CD8-positive, alpha-beta memory T cell (primary cell): ENCODE measurements at regions of chr9 and their contacts with region 1.

Region 1: GRCh38 chr9:134066913-134067851 is 644 bp downstream of the BRD3 start:
- DNase-seq: peak; percentile 46 to 68 (median 52)
- H3K4me3 ChIP-seq: peak overlapping the region; percentile 80
- H3K4me3 Mint-ChIP-seq: peak overlapping the region; percentile 87 to 98 (median 92)
- H3K27ac ChIP-seq: peak overlapping the region; percentile 69
- H3K27ac Mint-ChIP-seq: peak overlapping the region; percentile 59 to 98 (median 88)
- H3K4me1 ChIP-seq: peaks cover 28% of the 10 kb centered on the region
- H3K4me1 Mint-ChIP-seq: peaks cover 30 to 50% (median 32%) of the 10 kb centered on the region in 3 donors
- H3K27me3 ChIP-seq: peaks cover 20% of the 10 kb centered on the region
- H3K27me3 Mint-ChIP-seq: peaks cover 13 to 15% of the 10 kb centered on the region in 2 donors

Region 2: DNA sequence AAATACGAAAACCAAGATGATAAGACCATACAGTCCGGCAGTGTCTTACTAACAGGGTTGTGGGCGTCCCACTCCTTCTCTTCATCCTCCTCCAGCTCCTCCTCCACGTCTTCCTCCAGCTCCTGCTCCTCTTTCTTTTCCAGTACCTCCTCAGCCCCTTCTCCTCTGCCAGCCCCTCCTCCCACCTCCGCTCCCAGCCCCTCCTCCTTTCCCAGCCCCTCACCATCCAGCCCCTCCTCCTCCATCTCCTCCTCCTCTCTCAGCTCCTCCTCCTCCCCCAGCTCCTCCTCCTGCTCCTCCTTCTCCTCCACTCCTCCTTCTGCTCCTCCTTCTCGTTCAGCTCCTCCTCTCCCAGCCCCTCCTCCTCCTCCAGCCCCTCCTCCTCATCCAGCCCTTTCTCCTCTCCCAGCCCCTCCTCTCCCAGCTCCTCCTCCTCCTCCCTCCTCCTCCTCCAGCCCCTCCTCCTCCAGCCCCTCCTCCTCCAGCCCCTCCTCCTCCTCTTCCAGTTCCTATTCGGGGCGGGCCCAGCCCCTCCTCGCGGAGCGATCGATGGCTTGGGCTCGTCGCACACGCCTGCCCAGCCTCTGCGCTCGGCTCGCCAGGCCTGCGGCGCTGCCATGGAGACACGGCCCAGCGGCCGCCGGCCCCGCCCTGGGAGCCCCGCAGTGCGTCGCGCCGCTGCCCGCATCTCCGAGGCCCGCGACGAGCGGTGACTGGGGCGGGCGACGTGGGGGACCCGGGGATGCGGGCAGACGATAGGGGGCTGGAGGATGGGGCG is 42.2 kb before region 1 on chr9 and contains the start of gene BRD3OS:
- CTCF ChIA-PET with region 1: interaction called, 3 read pairs
- POLR2A ChIA-PET with region 1: interaction called, 13 read pairs
- DNase-seq: peak; percentile 87 to 95 (median 90)
- H3K4me3 ChIP-seq: peak within 1 kb of the TSS; percentile 70
- H3K4me3 Mint-ChIP-seq: peak within 1 kb of the TSS; percentile 70 to 89 (median 78)
- H3K27ac ChIP-seq: peak within 1 kb of the TSS; percentile 64
- H3K27ac Mint-ChIP-seq: peak within 1 kb of the TSS; percentile 24 to 88 (median 58)
- H3K4me1 ChIP-seq: peaks cover 9% of the 10 kb centered on the region
- H3K4me1 Mint-ChIP-seq: peaks cover 7 to 26% (median 15%) of the 10 kb centered on the region in 3 donors
- H3K27me3 ChIP-seq: no peaks in the 10 kb centered on the region
- H3K27me3 Mint-ChIP-seq: no peaks in the 10 kb centered on the region
- total RNA-seq, gene BRD3OS: 15.4 TPM